Gastrocnemius medialis (tissue), 4 donors: ENCODE measurements at regions of chr4 and their contacts with region 1.

Region 1: GRCh38 chr4:57043347-57044251 is 64.9 kb downstream of the POLR2B start:
- DNase-seq: no peak
- ATAC-seq: peak; percentile 63 to 76
- H3K4me3 ChIP-seq: no peak overlapping the region
- H3K27ac ChIP-seq: peak overlapping the region; percentile 58 to 73 (median 64)
- H3K4me1 ChIP-seq: peaks cover 6 to 35% of the 10 kb centered on the region in 2 donors
- H3K27me3 ChIP-seq: no peaks in the 10 kb centered on the region
- CTCF ChIP-seq: no peak
- POLR2A ChIP-seq: no peak

Region 2: DNA sequence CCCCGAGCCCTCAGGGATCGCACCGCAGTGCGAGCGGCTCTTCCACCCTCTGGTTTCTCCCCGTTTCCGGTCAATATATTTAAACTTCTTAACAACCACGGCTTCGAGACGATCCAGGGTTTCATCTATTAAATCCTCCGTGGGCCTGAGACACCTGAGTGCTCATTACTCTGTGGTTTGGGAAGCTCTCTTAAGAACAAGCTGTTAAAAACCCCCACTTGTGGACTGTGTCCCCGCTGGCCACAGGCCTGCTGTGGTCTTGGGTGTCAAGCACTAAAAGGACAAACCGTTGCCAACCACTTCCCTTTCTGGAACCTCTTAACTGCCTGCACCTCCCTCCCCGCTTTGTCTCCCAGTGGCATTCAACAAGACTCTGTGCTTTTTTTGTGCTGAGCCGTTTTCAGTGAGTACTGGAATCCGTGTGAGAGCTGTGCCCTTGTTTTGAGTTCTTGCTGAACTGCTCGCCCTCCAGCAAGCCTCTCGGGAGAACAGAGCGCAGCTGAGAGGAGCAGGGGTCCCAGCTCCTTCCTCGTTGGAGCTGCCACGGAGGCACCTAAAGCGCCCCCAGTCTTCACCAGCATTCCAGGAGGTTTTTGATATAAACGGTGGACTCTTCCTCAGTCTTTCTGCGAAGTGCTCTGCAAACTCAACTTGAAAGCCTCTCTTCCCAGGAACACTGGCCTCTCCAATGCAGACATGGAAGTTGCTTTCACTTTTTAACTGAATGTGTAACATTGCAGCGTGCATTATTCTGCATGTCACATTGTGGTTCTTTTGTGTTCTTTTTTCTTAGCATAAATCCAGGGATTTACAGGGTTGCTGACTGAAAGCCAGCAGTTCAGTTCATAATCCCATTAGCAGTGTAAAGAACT is 67.3 kb after region 1 on chr4:
- in situ Hi-C with region 1: no loop called
- intact Hi-C with region 1: loop called (anchors 5 kb)
- DNase-seq: no peak
- ATAC-seq: peak; percentile 57 to 67
- H3K4me3 ChIP-seq: peak overlapping the region; percentile 58 to 65 (median 62)
- H3K27ac ChIP-seq: peak overlapping the region; percentile 73 to 87 (median 80)
- H3K4me1 ChIP-seq: peaks cover 3 to 7% of the 10 kb centered on the region in 2 donors
- H3K27me3 ChIP-seq: peaks cover 0 to 8% (median 0%) of the 10 kb centered on the region in 3 donors
- CTCF ChIP-seq: no peak
- POLR2A ChIP-seq: no peak